ENCODE measurements at regions of chr13 and their contacts with region 1.

Region 1: GRCh38 chr13:55682776-55683175 is 1457.9 kb upstream of the PRR20A start:
- DNase-seq: no peak
- H3K4me3 ChIP-seq: no peak overlapping the region
- H3K27ac ChIP-seq: no peak overlapping the region
- H3K4me1 ChIP-seq: no peaks in the 10 kb centered on the region
- H3K27me3 ChIP-seq: no peaks in the 10 kb centered on the region
- CTCF ChIP-seq: no peak
- POLR2A ChIP-seq: no peak

Region 2: DNA sequence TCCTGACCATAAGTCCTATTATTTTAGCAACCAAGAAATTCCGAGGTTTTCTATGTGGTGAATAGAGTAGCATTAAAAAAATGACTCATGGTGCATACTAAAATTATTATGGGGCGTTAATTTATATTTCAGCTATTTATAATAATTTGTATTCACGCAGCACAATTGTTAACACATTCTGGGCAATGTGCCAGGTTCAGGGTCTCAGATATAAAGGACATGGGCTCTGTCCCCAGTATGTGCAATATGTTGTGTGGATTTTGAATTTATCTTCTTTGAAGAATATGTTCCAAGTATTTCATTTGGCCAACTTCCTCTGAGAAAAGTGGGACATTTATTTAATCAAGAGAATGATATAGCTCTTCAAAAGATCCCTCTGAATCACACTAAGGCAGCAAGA is 23.2 kb after region 1 on chr13:
- intact Hi-C with region 1: no loop called
- DNase-seq: no peak
- H3K4me3 ChIP-seq: no peak overlapping the region
- H3K27ac ChIP-seq: no peak overlapping the region
- H3K4me1 ChIP-seq: no peaks in the 10 kb centered on the region
- H3K27me3 ChIP-seq: no peaks in the 10 kb centered on the region
- CTCF ChIP-seq: no peak
- POLR2A ChIP-seq: no peak

Region 3: GRCh38 chr13:56332671-56333070 is 649.9 kb after region 1 on chr13:
- intact Hi-C with region 1: no loop called
- DNase-seq: no peak
- H3K4me3 ChIP-seq: no peak overlapping the region
- H3K27ac ChIP-seq: no peak overlapping the region
- H3K4me1 ChIP-seq: no peaks in the 10 kb centered on the region
- H3K27me3 ChIP-seq: no peaks in the 10 kb centered on the region
- CTCF ChIP-seq: no peak
- POLR2A ChIP-seq: no peak

Region 4: GRCh38 chr13:57212989-57213388 is 1530.2 kb after region 1 on chr13:
- intact Hi-C with region 1: loop called (anchors 10 kb)
- DNase-seq: no peak
- H3K4me3 ChIP-seq: no peak overlapping the region
- H3K27ac ChIP-seq: no peak overlapping the region
- H3K4me1 ChIP-seq: no peaks in the 10 kb centered on the region
- H3K27me3 ChIP-seq: no peaks in the 10 kb centered on the region
- CTCF ChIP-seq: no peak
- POLR2A ChIP-seq: no peak

Measured in breast epithelium (tissue), 4 donors.